OCI-LY7 (cell line): ENCODE measurements at regions of chr1 and their contacts with region 1.

Region 1: GRCh38 chr1:198937231-198938031 is 298.6 kb downstream of the PTPRC start:
- DNase-seq: peak; percentile 94
- H3K4me3 ChIP-seq: peak overlapping the region; percentile 78
- H3K27ac ChIP-seq: peak overlapping the region; percentile 88
- H3K4me1 ChIP-seq: peaks cover 29% of the 10 kb centered on the region
- CTCF ChIP-seq: no peak

Region 2: DNA sequence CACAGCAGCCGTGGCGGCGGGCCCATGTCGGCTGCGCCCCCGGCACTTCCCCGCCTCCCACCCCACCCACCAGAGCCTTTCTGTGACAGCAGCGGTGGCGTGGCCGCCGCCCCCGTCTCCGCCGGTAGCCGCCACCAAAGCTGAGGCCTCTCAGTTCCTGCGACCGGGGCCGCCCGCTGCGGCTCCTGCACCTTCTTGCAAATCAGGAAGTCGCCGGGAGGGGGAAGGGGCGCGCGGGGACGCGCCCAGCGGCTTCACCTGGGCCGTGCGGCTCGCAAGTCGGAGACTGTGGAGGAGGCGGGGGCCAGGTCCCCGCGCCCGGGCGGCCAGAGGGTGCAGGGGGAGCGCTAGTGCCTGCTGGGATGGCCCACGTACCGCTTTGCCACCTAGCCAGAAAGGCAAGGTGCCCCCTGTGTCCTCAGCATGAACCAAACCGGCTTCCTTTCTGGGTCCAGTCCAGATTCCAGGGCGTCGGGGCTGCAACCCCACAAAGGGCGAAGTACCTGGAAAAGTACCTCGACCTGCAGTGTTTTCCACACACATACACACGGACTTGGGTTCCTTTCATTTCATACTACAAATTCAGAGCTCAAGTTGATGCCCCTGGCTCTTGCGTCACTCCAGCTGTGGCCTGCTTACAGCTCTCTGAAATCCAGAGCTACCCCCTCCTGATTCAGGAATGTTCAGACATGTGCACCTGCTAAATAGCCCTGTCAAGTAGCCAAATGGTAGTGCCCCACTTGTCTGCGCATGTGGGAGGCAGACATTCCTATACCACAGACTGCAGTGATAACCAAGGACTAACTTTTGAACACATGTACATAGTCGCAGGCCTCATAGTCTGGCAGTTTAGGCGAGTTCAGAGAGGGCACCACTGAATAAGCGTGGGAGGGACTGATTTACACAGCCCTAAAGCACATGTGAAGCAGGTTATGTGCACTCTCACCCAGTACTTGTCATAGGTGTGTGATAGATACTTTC is 1161.9 kb before region 1 on chr1 and contains the start of gene DENND1B:
- CTCF ChIA-PET with region 1: no interaction called
- POLR2A ChIA-PET with region 1: no interaction called
- intact Hi-C with region 1: loop called (anchors 10 kb)
- DNase-seq: peak; percentile 92
- H3K4me3 ChIP-seq: peak within 1 kb of the TSS; percentile 85
- H3K27ac ChIP-seq: peak within 1 kb of the TSS; percentile 85
- H3K4me1 ChIP-seq: peaks cover 58% of the 10 kb centered on the region
- CTCF ChIP-seq: no peak
- total RNA-seq, gene DENND1B: 11.4 and 17.4 TPM in 2 replicates

Region 3: GRCh38 chr1:198922638-198923430 is 14.6 kb before region 1 on chr1:
- CTCF ChIA-PET with region 1: interaction called, 3 read pairs
- POLR2A ChIA-PET with region 1: interaction called, 37 read pairs
- intact Hi-C with region 1: no loop called
- DNase-seq: no peak
- H3K4me3 ChIP-seq: no peak overlapping the region
- H3K27ac ChIP-seq: no peak overlapping the region
- H3K4me1 ChIP-seq: peaks cover 19% of the 10 kb centered on the region
- CTCF ChIP-seq: no peak

Region 4: GRCh38 chr1:198986442-198986841 is 49.0 kb after region 1 on chr1:
- CTCF ChIA-PET with region 1: no interaction called
- POLR2A ChIA-PET with region 1: no interaction called
- intact Hi-C with region 1: no loop called
- DNase-seq: no peak
- H3K4me3 ChIP-seq: no peak overlapping the region
- H3K27ac ChIP-seq: no peak overlapping the region
- H3K4me1 ChIP-seq: no peaks in the 10 kb centered on the region
- CTCF ChIP-seq: no peak

Region 5: GRCh38 chr1:199041173-199041914 is 103.9 kb after region 1 on chr1:
- CTCF ChIA-PET with region 1: interaction called, 3 read pairs
- POLR2A ChIA-PET with region 1: interaction called, 13 read pairs
- intact Hi-C with region 1: loop called (anchors 1 kb)
- DNase-seq: peak; percentile 91
- H3K4me3 ChIP-seq: peak overlapping the region; percentile 38
- H3K27ac ChIP-seq: peak overlapping the region; percentile 92
- H3K4me1 ChIP-seq: peaks cover 43% of the 10 kb centered on the region
- CTCF ChIP-seq: no peak

Region 6: DNA sequence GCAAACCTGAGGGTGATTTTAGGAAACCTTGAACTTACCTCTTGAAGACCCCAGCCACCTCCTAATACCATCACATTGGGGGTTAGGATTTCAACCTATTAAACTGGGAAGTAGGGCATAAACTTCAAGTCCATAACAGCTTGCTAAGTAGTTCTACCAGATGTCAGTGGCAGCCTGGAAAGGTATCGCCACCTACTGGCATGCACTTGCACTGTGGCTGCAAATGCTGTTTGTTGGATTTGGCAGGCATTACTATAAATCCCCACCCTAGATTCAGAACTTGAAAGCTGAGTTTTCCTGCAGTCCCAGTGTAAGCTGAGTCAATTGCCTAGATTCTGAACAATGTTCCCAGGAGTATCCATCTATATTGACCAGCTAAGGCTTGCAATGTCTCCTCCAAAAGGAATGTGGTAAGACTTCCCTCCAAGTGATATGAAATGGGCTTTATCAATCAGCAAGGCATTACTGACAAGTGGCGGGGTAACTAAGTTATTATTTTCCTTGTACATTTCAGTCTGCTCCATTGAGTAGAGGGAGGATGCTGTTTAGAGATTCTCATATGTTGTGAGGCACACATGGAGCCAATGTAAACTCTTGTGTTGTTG is 175.9 kb after region 1 on chr1:
- CTCF ChIA-PET with region 1: no interaction called
- POLR2A ChIA-PET with region 1: interaction called, 15 read pairs
- intact Hi-C with region 1: loop called (anchors 1 kb)
- DNase-seq: peak; percentile 80
- H3K4me3 ChIP-seq: no peak overlapping the region
- H3K27ac ChIP-seq: no peak overlapping the region
- H3K4me1 ChIP-seq: no peaks in the 10 kb centered on the region
- CTCF ChIP-seq: peak; percentile 98